Caco-2 (cell line): ENCODE measurements at regions of chr11 and their contacts with region 1.

Region 1: GRCh38 chr11:61587521-61588453 is 6.9 kb upstream of the SYT7 start:
- DNase-seq: peak; percentile 87 to 89
- H3K4me3 ChIP-seq: peak overlapping the region; percentile 61
- H3K4me3 Mint-ChIP-seq: peak overlapping the region; percentile 72
- H3K27ac Mint-ChIP-seq: no peak overlapping the region
- H3K4me1 ChIP-seq: peaks cover 16% of the 10 kb centered on the region
- H3K4me1 Mint-ChIP-seq: peaks cover 9% of the 10 kb centered on the region
- H3K27me3 ChIP-seq: no peaks in the 10 kb centered on the region
- H3K27me3 Mint-ChIP-seq: no peaks in the 10 kb centered on the region
- CTCF ChIP-seq: peak; percentile 29 to 52

Region 2: DNA sequence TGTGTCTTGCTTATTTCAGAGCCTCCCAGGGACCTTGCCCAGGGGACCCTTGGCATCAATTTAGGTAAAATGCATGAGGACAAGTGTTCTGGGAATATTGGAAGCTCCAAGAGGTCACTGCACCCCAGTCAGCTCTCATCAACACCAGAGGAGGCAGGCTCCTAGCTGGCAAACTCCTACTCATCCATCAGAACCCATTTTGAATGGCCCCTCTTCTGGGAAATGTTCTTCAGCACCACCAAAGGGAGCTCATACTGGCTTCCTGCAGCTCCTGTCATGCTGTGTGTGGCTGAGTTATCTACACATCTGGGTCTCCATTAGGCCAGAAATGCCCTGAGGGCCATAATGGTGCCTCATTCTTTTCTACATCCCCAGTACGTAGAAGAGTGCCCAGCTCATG is 61.6 kb before region 1 on chr11:
- CTCF ChIA-PET with region 1: no interaction called
- POLR2A ChIA-PET with region 1: no interaction called
- intact Hi-C with region 1: no loop called
- DNase-seq: no peak
- H3K4me3 ChIP-seq: no peak overlapping the region
- H3K4me3 Mint-ChIP-seq: no peak overlapping the region
- H3K27ac Mint-ChIP-seq: no peak overlapping the region
- H3K4me1 ChIP-seq: peaks cover 10% of the 10 kb centered on the region
- H3K4me1 Mint-ChIP-seq: peaks cover 5% of the 10 kb centered on the region
- H3K27me3 ChIP-seq: no peaks in the 10 kb centered on the region
- H3K27me3 Mint-ChIP-seq: no peaks in the 10 kb centered on the region
- CTCF ChIP-seq: no peak

Region 3: GRCh38 chr11:61545341-61545740 is 42.4 kb before region 1 on chr11:
- CTCF ChIA-PET with region 1: no interaction called
- POLR2A ChIA-PET with region 1: no interaction called
- intact Hi-C with region 1: no loop called
- DNase-seq: no peak
- H3K4me3 ChIP-seq: no peak overlapping the region
- H3K4me3 Mint-ChIP-seq: no peak overlapping the region
- H3K27ac Mint-ChIP-seq: peak overlapping the region; percentile 51
- H3K4me1 ChIP-seq: peaks cover 9% of the 10 kb centered on the region
- H3K4me1 Mint-ChIP-seq: peaks cover 6% of the 10 kb centered on the region
- H3K27me3 ChIP-seq: no peaks in the 10 kb centered on the region
- H3K27me3 Mint-ChIP-seq: no peaks in the 10 kb centered on the region
- CTCF ChIP-seq: peak; percentile 35 to 40

Region 4: DNA sequence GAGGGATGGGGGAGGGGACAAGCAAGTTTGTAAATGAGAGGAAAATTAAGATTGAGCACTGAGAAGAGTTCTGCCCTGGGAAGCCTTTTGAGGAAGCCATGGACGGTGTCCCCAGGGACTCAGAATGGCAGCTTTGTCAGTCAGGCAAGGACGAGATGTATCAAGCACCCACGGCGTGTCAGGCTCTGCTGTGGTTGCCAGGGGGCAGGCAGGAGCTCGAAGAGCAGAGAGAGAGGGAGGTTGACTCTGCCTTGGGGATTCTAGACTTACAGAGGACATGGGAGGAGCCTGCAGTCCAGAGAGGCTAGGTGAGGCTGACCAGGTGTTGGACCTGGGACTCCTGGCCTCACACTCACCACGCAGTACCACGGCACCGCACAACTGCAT is 22.2 kb after region 1 on chr11:
- CTCF ChIA-PET with region 1: interaction called, 7 read pairs
- POLR2A ChIA-PET with region 1: no interaction called
- intact Hi-C with region 1: loop called (anchors 1 kb)
- DNase-seq: peak; percentile 68 to 71
- H3K4me3 ChIP-seq: no peak overlapping the region
- H3K4me3 Mint-ChIP-seq: peak overlapping the region; percentile 61
- H3K27ac Mint-ChIP-seq: peak overlapping the region; percentile 71
- H3K4me1 ChIP-seq: peaks cover 37% of the 10 kb centered on the region
- H3K4me1 Mint-ChIP-seq: peaks cover 22% of the 10 kb centered on the region
- H3K27me3 ChIP-seq: no peaks in the 10 kb centered on the region
- H3K27me3 Mint-ChIP-seq: no peaks in the 10 kb centered on the region
- CTCF ChIP-seq: peak in 1 of 2 experiments; percentile 25